T-cell (primary cell): ENCODE measurements at regions of chr1 and their contacts with region 1.

Region 1: DNA sequence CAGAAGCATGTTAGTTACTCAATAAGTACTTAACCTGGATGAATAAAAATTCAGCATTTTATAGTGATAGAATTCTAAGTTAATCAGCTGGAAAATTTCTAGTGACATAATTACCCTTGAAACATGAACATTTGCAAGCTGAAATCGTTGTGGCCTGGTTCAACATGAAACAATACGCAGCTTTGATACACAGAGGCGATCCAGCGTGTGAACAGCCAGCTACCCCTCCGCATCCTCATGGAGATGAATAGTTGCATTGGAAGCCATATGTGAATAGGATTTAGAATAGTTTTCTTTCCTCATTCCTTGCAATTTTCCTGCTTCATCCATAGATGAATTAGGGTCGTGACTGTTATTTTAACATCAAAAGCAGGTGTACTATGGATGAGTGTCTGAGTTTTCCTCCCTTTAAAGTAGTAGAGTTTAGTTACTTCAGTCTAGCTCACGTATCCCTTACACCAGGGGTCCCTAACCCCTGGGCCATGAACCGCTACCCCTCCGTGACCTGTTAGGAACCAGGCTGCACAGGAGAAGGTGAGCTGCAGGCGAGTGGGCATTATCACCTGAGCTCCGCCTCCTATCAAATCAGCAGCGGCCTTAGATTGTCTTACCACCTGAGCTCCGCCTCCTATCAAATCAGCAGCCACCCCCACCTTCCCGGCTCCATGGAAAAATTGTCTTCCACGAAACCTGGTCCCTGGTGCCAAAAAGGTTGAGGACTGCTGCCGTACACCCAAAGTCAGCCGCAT is 6.2 kb upstream of the TARBP1 start:
- DNase-seq: no peak
- ATAC-seq: no peak
- H3K4me3 ChIP-seq: no peak overlapping the region
- H3K4me3 Mint-ChIP-seq: no peak overlapping the region
- H3K27ac ChIP-seq: no peak overlapping the region
- H3K27ac Mint-ChIP-seq: no peak overlapping the region
- H3K4me1 ChIP-seq: peaks cover 8 to 9% of the 10 kb centered on the region in 2 experiments
- H3K4me1 Mint-ChIP-seq: peaks cover 18 to 19% (median 18%) of the 10 kb centered on the region in 3 donors
- H3K27me3 ChIP-seq: peaks cover 0 to 6% of the 10 kb centered on the region in 2 experiments
- H3K27me3 Mint-ChIP-seq: peaks cover 0 to 9% of the 10 kb centered on the region in 2 donors

Region 2: DNA sequence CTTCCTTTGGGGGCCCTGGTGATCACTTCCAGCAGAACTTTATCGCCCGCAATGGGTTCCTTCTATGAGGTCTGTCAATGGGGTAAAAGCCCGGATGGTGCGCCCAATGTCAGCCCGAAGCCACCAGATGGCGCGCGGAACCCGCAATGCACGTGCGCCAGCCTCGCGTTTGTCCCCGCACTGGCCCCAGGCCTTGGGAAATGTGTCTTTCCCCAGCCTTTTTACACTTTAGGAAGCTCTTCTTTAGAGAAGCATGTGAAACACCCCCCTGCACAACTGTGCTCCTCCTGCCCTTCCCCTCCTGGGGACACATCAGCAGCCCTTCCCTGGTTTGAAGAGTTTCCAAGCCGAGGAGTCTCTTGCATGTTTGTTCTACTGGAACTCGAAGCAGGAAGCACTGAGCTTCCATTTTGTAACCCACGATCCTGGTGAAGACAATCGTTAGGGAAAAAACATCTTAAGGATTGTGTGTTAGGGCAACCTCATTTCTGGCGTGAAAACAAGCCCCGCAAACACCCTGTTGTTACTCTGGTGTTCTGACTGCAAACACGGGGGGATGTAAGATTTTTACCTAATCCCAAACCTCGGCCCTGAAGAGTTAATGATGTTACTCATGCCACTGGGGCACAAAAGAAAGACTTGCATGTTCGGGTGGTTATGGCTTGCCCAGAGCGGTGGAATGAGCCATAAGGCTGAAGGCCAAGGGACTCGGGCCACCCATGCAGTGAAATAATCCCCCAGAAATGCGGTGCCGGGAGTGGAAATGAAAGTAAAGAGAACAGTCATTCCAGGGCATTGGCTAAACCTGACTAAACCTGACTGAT is 14.2 kb after region 1 on chr1:
- CTCF ChIA-PET with region 1: interaction called in 1 of 2 experiments, 4 read pairs
- POLR2A ChIA-PET with region 1: interaction called in 1 of 2 experiments, 22 read pairs
- DNase-seq: peak; percentile 41 to 86 (median 74)
- ATAC-seq: peak; percentile 95 to 99 (median 96)
- H3K4me3 ChIP-seq: no peak overlapping the region
- H3K4me3 Mint-ChIP-seq: no peak overlapping the region
- H3K27ac ChIP-seq: no peak overlapping the region
- H3K27ac Mint-ChIP-seq: no peak overlapping the region
- H3K4me1 ChIP-seq: peaks cover 0 to 6% of the 10 kb centered on the region in 2 experiments
- H3K4me1 Mint-ChIP-seq: peaks cover 7 to 11% (median 11%) of the 10 kb centered on the region in 3 donors
- H3K27me3 ChIP-seq: peaks cover 0 to 7% of the 10 kb centered on the region in 2 experiments
- H3K27me3 Mint-ChIP-seq: peaks cover 0 to 2% of the 10 kb centered on the region in 2 donors

Region 3: GRCh38 chr1:234933475-234933874 is 448.3 kb after region 1 on chr1:
- CTCF ChIA-PET with region 1: no interaction called
- POLR2A ChIA-PET with region 1: no interaction called
- DNase-seq: no peak
- ATAC-seq: no peak
- H3K4me3 ChIP-seq: no peak overlapping the region
- H3K4me3 Mint-ChIP-seq: no peak overlapping the region
- H3K27ac ChIP-seq: no peak overlapping the region
- H3K27ac Mint-ChIP-seq: no peak overlapping the region
- H3K4me1 ChIP-seq: peaks cover 12 to 19% of the 10 kb centered on the region in 2 experiments
- H3K4me1 Mint-ChIP-seq: peaks cover 14 to 23% (median 20%) of the 10 kb centered on the region in 3 donors
- H3K27me3 ChIP-seq: no peaks in the 10 kb centered on the region
- H3K27me3 Mint-ChIP-seq: no peaks in the 10 kb centered on the region